CD4-positive, alpha-beta memory T cell (primary cell): ENCODE measurements at regions of chr19 and their contacts with region 1.

Region 1: DNA sequence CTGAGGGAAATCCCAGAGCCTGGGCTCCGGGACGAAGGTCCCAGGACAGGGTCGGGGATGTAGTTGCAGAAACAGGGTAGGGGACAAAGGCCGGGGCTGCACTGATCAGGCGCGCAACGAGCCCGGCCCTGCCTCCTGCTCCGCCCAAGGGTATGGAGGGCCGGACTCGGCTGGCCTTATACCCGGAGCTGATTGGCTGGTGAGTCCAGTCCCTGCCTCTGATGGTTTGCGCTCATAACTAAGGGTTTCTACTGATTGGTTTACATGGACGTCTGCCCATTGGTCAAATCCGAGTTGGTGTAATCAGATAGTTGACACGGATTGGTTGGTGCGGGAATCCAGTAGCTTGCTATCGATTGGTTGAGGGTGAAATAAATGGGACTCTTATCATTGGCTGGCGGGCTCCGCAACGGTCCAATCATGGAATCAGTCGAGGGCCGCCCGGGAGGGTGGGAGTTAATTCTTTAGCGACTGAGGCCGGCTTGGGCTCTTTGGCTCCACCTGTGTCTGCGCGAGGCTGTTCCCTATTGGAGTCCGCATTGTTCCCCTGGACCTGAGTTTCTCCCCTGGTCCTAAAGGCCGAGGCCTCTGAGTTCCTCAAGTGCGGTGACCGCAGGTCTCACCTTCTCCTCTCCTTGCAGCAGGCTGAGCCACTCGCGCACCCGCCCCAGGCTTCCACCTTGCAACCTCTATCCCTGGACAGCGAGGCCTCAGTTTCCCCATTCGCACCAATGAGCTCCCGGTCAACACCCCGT is 570 bp upstream of the MPND start:
- DNase-seq: peak; percentile 94 to 98 (median 97)
- H3K4me3 ChIP-seq: peak overlapping the region; percentile 91 to 98
- H3K4me3 Mint-ChIP-seq: peak overlapping the region; percentile 81 to 93 (median 91)
- H3K27ac ChIP-seq: peak overlapping the region; percentile 79
- H3K27ac Mint-ChIP-seq: peak overlapping the region; percentile 88 to 97 (median 95)
- H3K4me1 ChIP-seq: peaks cover 28% of the 10 kb centered on the region
- H3K4me1 Mint-ChIP-seq: peaks cover 17 to 42% (median 28%) of the 10 kb centered on the region in 4 donors
- H3K27me3 ChIP-seq: no peaks in the 10 kb centered on the region
- H3K27me3 Mint-ChIP-seq: no peaks in the 10 kb centered on the region

Region 2: DNA sequence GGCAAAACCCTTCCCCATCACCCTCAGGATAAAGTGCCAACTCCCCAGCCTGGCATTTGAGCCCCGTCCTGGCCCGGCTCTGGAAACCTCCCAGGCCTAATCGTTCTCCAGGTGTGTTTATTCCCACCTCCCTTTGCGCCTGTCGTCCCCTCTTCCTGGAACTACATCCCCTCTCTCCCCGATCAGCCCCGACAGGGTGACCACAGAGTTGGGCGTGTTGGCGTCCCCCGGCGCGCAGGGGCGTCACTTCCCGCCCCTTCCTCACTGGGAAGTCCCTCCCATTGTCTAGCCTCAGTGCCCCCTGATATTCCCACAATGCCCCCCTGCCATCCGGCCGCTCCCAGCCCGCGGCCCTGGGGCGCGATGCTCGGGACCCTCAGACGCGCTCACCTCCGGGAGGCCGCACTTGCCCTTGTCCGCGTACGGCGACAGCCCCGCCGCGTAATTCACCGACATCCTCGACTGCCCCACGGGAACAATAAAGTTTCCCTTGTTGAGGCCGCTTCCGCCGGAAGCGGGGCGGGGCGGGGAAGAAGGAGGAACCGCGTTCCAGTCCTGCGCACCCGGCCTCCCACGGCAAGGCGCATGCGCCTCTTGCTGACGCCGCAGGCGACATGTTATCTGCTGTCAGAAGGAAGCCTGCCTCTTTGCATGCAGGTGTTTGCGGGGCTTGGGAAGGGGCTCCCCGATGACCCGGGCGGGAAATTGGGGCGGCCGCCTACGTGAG is 160.5 kb before region 1 on chr19 and contains the starts of genes ANKRD24 and SIRT6:
- CTCF ChIA-PET with region 1: no interaction called
- POLR2A ChIA-PET with region 1: no interaction called
- intact Hi-C with region 1: loop called (anchors 5 kb)
- DNase-seq: peak; percentile 95 to 96 (median 96)
- H3K4me3 ChIP-seq: peak within 1 kb of the TSS; percentile 91 to 97
- H3K4me3 Mint-ChIP-seq: peak within 1 kb of the TSS; percentile 94 to 99 (median 96)
- H3K27ac ChIP-seq: peak within 1 kb of the TSS; percentile 81
- H3K27ac Mint-ChIP-seq: peak within 1 kb of the TSS; percentile 92 to 100 (median 96)
- H3K4me1 ChIP-seq: peaks cover 27% of the 10 kb centered on the region
- H3K4me1 Mint-ChIP-seq: peaks cover 30 to 41% (median 33%) of the 10 kb centered on the region in 4 donors
- H3K27me3 ChIP-seq: no peaks in the 10 kb centered on the region
- H3K27me3 Mint-ChIP-seq: peaks cover 0 to 3% of the 10 kb centered on the region in 2 donors
- total RNA-seq, gene ANKRD24: 1.9 to 2.9 TPM
- total RNA-seq, gene SIRT6: 26.8 to 27.0 TPM

Region 3: GRCh38 chr19:4246767-4247593 is 95.8 kb before region 1 on chr19 and contains the start of gene YJU2:
- CTCF ChIA-PET with region 1: interaction called, 3 read pairs
- POLR2A ChIA-PET with region 1: interaction called, 36 read pairs
- intact Hi-C with region 1: loop called (anchors 1 kb)
- DNase-seq: peak; percentile 98 to 100 (median 99)
- H3K4me3 ChIP-seq: peak within 1 kb of the TSS; percentile 88 to 89
- H3K4me3 Mint-ChIP-seq: peak within 1 kb of the TSS; percentile 91 to 98 (median 96)
- H3K27ac ChIP-seq: peak within 1 kb of the TSS; percentile 99
- H3K27ac Mint-ChIP-seq: peak within 1 kb of the TSS; percentile 97 to 100 (median 99)
- H3K4me1 ChIP-seq: peaks cover 16% of the 10 kb centered on the region
- H3K4me1 Mint-ChIP-seq: peaks cover 6 to 31% (median 20%) of the 10 kb centered on the region in 4 donors
- H3K27me3 ChIP-seq: no peaks in the 10 kb centered on the region
- H3K27me3 Mint-ChIP-seq: peaks cover 0 to 2% of the 10 kb centered on the region in 2 donors
- total RNA-seq, gene YJU2: 28.1 to 29.4 TPM

Region 4: DNA sequence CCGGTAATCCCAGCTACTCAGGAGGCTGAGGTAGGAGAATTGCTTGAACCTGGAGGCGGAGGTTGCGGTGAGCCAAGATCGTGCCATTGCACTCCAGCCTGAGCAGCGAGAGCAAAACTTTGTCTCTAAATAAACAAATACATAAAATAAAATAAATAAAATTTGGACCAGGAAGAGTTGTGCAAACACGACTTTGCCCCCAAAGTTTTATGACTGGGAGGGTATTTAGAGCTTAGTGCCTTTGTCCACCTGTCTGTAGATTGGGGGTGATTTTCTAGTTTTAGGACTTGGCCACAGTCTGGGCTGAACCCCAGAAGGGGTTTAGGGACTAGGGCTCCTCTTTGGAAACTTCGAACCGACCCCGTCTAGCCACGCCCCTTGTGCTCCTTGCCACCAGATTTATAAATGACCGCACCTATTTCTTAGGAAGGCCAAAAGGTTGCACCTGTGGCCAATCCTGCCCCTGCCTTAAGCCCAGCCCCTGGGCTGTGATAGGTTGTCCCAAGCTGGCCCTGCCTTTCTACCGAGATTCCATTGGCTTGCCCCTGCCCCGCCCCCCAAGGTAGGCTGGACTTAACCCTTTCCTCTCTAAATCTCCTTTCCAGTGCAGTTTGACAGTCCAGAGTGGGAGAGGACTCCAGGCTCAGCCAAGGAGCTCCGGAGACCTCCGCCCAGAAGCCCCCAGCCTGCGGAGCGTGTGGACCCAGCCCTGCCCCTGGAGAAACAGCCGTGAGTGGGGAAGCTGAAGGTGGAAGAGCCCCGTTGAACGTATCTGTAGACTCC is 58.4 kb before region 1 on chr19:
- CTCF ChIA-PET with region 1: no interaction called
- POLR2A ChIA-PET with region 1: no interaction called
- intact Hi-C with region 1: no loop called
- DNase-seq: no peak
- H3K4me3 ChIP-seq: no peak overlapping the region
- H3K4me3 Mint-ChIP-seq: no peak overlapping the region
- H3K27ac ChIP-seq: no peak overlapping the region
- H3K27ac Mint-ChIP-seq: no peak overlapping the region
- H3K4me1 ChIP-seq: no peaks in the 10 kb centered on the region
- H3K4me1 Mint-ChIP-seq: no peaks in the 10 kb centered on the region
- H3K27me3 ChIP-seq: peaks cover 3% of the 10 kb centered on the region
- H3K27me3 Mint-ChIP-seq: peaks cover 10 to 20% of the 10 kb centered on the region in 2 donors

Region 5: DNA sequence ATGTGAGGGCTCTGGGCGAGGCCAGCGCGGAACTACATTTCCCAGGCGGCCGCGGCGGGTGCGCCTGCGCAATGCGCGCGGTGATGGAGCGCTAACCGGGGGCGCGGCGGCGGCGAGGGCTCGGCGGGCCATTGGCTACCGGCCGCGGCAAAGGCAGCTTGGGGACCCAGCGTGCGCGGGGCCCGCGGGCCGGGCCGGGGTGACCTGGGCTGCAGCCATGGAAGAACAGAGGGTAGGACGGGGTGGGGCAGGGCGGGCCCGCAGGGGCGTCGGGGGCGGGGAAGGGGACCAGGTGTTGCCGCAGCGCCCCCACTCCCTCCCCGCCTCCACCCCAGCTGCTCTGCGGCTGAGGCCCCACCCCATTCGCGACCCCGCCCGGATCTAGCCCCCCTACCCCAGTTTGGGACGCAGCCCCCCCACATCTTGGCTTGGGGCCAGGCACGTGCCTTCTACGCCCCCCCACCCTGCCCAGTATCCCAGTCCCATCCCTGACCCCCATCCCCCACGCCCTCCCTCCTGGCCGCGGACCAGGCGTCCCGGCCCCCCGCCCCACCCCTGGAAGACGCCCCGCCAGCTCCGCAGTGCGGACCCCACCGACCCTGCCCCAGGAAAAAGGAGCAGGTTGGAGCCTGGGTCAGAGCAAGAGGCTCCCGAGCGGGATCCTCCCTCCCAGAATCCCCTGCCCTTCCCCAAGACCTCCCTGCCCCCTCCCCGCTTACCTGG is 38.1 kb before region 1 on chr19 and contains the start of gene FSD1:
- CTCF ChIA-PET with region 1: no interaction called
- POLR2A ChIA-PET with region 1: interaction called, 3 read pairs
- intact Hi-C with region 1: loop called (anchors 5 kb)
- DNase-seq: peak in 4 of 5 donors; percentile 38 to 51 (median 46)
- H3K4me3 ChIP-seq: no peak within 1 kb of the TSS
- H3K4me3 Mint-ChIP-seq: peak within 1 kb of the TSS; percentile 28 to 80 (median 67)
- H3K27ac ChIP-seq: no peak within 1 kb of the TSS
- H3K27ac Mint-ChIP-seq: peak within 1 kb of the TSS in 5 of 7 donors; percentile 42 to 87 (median 74)
- H3K4me1 ChIP-seq: peaks cover 18% of the 10 kb centered on the region
- H3K4me1 Mint-ChIP-seq: peaks cover 13 to 31% (median 22%) of the 10 kb centered on the region in 4 donors
- H3K27me3 ChIP-seq: no peaks in the 10 kb centered on the region
- H3K27me3 Mint-ChIP-seq: peaks cover 0 to 6% of the 10 kb centered on the region in 2 donors
- total RNA-seq, gene FSD1: 0.73 to 1.4 TPM

Region 6: GRCh38 chr19:4328243-4328990 is 14.4 kb before region 1 on chr19:
- CTCF ChIA-PET with region 1: interaction called, 8 read pairs
- POLR2A ChIA-PET with region 1: interaction called, 25 read pairs
- intact Hi-C with region 1: loop called (anchors 1 kb)
- DNase-seq: peak; percentile 88 to 93 (median 92)
- H3K4me3 ChIP-seq: peak overlapping the region; percentile 59 to 61
- H3K4me3 Mint-ChIP-seq: peak overlapping the region; percentile 77 to 91 (median 82)
- H3K27ac ChIP-seq: no peak overlapping the region
- H3K27ac Mint-ChIP-seq: peak overlapping the region; percentile 72 to 99 (median 89)
- H3K4me1 ChIP-seq: peaks cover 19% of the 10 kb centered on the region
- H3K4me1 Mint-ChIP-seq: peaks cover 8 to 29% (median 20%) of the 10 kb centered on the region in 4 donors
- H3K27me3 ChIP-seq: no peaks in the 10 kb centered on the region
- H3K27me3 Mint-ChIP-seq: peaks cover 0 to 3% of the 10 kb centered on the region in 2 donors

Region 7: GRCh38 chr19:4369888-4370260 is 27.1 kb after region 1 on chr19:
- CTCF ChIA-PET with region 1: no interaction called
- POLR2A ChIA-PET with region 1: interaction called, 42 read pairs
- intact Hi-C with region 1: loop called (anchors 1 kb)
- DNase-seq: peak; percentile 69 to 78 (median 71)
- H3K4me3 ChIP-seq: peak overlapping the region; percentile 51 to 69
- H3K4me3 Mint-ChIP-seq: peak overlapping the region; percentile 79 to 97 (median 92)
- H3K27ac ChIP-seq: peak overlapping the region; percentile 87
- H3K27ac Mint-ChIP-seq: peak overlapping the region; percentile 92 to 97 (median 95)
- H3K4me1 ChIP-seq: peaks cover 67% of the 10 kb centered on the region
- H3K4me1 Mint-ChIP-seq: peaks cover 14 to 54% (median 30%) of the 10 kb centered on the region in 4 donors
- H3K27me3 ChIP-seq: no peaks in the 10 kb centered on the region
- H3K27me3 Mint-ChIP-seq: no peaks in the 10 kb centered on the region

Region 8: DNA sequence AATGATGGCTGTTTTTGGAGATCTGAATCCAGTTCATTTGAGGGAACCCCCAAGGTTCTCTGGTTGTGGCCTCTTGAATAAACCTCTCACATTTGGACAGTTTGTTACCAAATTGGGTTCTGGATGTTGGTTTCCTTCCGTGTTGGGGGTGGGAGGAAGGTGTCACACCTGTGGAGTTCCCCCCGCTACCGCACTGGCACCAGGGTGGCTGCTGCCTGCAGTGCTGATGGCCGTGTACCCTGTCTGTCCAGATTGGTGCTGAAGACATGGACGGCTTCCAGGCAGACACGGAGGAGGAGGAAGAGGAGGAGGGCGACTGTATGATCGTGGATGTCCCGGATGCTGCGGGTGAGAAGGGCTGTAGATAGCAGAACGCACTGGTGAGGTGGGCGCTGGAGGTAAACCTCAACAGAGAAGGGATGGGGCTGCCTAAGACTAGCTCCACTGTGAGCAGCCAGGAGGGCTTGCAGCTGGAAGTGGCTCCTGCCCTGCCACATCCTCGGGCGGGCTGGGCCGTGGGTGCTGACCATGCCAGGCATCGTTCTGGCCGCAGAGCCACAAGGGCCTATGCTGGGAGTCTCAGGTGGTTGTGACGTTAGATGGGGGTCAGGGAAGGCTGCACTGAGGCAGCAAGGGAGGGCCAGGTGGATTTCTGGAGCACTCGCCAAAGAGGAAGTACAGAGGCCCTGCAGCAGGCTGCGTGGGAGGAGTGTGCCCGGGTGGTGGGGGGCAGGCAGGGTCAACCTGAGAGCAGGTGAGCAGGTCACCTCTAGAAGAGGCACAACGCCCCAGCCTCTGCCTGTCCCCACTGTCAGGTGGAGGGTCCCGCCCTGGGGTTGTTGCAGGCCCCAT is 99.4 kb after region 1 on chr19:
- CTCF ChIA-PET with region 1: no interaction called
- POLR2A ChIA-PET with region 1: no interaction called
- intact Hi-C with region 1: no loop called
- DNase-seq: no peak
- H3K4me3 ChIP-seq: no peak overlapping the region
- H3K4me3 Mint-ChIP-seq: peak overlapping the region in 2 of 8 donors; percentile 29 to 53
- H3K27ac ChIP-seq: no peak overlapping the region
- H3K27ac Mint-ChIP-seq: peak overlapping the region in 5 of 7 donors; percentile 42 to 86 (median 72)
- H3K4me1 ChIP-seq: no peaks in the 10 kb centered on the region
- H3K4me1 Mint-ChIP-seq: peaks cover 0 to 8% (median 5%) of the 10 kb centered on the region in 4 donors
- H3K27me3 ChIP-seq: no peaks in the 10 kb centered on the region
- H3K27me3 Mint-ChIP-seq: no peaks in the 10 kb centered on the region

Region 9: DNA sequence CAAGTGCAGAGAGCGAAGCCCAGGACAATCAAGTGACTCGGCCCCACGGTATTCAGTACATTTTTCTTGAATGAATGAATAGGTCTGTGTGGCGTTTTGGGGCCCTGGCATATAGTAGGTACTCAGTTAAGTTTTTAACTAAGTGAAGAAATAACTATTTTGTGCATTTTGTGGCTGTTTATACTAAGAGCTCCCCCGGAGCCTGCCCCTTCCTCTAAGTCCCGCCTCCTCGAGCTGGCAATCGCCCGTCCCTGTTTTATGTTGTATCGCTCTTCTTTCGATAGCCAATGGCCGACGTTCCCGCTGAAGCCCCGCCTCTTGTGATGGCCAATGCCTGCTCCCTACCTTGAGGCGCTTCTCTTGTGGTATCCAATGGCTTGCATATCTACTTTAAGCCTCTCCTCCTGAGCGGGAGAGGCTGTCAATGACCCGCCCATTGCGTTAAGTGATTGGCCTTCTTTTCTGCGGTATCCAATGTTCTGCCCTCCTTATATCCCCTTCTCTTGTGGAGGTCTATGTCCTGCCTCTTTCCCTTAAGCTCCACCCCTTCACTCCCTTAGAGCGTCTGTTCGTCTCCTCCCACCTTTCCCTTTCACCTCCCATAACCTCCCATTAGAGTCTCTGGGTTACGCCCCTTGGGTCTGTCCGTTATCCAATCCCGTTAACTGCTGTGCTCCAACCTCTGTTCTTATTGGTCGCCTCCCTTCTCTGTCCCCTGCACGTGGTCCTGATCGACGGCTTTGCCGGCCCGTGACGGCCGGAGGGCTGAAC is 128.8 kb after region 1 on chr19:
- CTCF ChIA-PET with region 1: no interaction called
- POLR2A ChIA-PET with region 1: interaction called, 21 read pairs
- intact Hi-C with region 1: loop called (anchors 1 kb)
- DNase-seq: peak; percentile 96 to 100 (median 99)
- H3K4me3 ChIP-seq: peak overlapping the region; percentile 27 to 68
- H3K4me3 Mint-ChIP-seq: no peak overlapping the region
- H3K27ac ChIP-seq: peak overlapping the region; percentile 74
- H3K27ac Mint-ChIP-seq: no peak overlapping the region
- H3K4me1 ChIP-seq: peaks cover 30% of the 10 kb centered on the region
- H3K4me1 Mint-ChIP-seq: peaks cover 9 to 26% (median 16%) of the 10 kb centered on the region in 4 donors
- H3K27me3 ChIP-seq: no peaks in the 10 kb centered on the region
- H3K27me3 Mint-ChIP-seq: no peaks in the 10 kb centered on the region

Region 10: GRCh38 chr19:4567584-4568071 is 224.8 kb after region 1 on chr19:
- CTCF ChIA-PET with region 1: no interaction called
- POLR2A ChIA-PET with region 1: no interaction called
- intact Hi-C with region 1: no loop called
- DNase-seq: peak in 4 of 5 donors; percentile 32 to 48 (median 44)
- H3K4me3 ChIP-seq: no peak overlapping the region
- H3K4me3 Mint-ChIP-seq: no peak overlapping the region
- H3K27ac ChIP-seq: no peak overlapping the region
- H3K27ac Mint-ChIP-seq: peak overlapping the region in 1 of 7 donors; percentile 51
- H3K4me1 ChIP-seq: no peaks in the 10 kb centered on the region
- H3K4me1 Mint-ChIP-seq: no peaks in the 10 kb centered on the region
- H3K27me3 ChIP-seq: no peaks in the 10 kb centered on the region
- H3K27me3 Mint-ChIP-seq: peaks cover 4 to 6% of the 10 kb centered on the region in 2 donors